ENCODE measurements at regions of chr15 and their contacts with region 1.

Region 1: DNA sequence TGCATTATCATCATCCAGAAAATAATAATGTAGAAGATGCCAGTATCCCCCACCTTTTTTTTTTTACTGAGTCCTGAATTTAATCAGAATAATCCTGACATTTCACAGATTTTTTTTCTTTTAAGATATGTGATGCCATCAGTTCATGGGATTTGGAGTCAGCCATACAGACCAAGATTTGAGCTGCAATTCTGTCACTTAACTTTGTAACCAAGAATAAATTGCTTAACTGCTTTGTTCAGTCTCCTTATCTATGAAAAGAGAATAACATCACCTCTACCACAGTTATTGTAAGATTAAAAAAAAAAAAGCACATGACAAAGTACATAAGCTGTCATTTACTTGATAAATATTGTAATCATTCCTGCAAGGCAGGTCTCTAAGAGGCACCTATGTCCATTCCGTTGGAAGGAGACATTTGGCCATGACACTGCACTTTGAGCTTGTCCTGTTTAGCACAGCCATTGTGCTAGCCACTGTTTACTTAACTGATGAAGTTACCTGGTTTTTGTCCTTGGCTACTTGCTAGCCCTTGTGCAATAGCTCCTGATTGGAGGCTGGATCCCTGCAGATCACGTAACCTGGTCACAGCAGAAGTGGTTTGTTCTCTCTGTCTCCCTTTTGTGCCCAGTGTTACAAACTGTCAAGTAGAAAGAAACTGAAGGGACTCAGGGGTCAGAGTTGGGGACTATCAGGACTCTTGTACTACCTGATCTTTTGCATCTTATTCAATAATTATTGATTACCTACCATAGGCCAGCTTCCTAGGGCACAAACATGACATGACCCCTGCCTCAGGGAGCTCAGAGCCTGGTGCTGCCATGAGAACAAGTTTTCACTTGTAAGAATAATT is 306.0 kb downstream of the WDR72 start:
- DNase-seq: no peak
- H3K4me3 ChIP-seq: no peak overlapping the region
- H3K4me3 Mint-ChIP-seq: no peak overlapping the region
- H3K27ac ChIP-seq: no peak overlapping the region
- H3K27ac Mint-ChIP-seq: no peak overlapping the region
- H3K4me1 ChIP-seq: no peaks in the 10 kb centered on the region
- H3K4me1 Mint-ChIP-seq: no peaks in the 10 kb centered on the region
- H3K27me3 ChIP-seq: no peaks in the 10 kb centered on the region
- H3K27me3 Mint-ChIP-seq: no peaks in the 10 kb centered on the region

Region 2: GRCh38 chr15:53346583-53346982 is 106.9 kb before region 1 on chr15:
- CTCF ChIA-PET with region 1: no interaction called
- POLR2A ChIA-PET with region 1: no interaction called
- intact Hi-C with region 1: loop called (anchors 5 kb)
- DNase-seq: no peak
- H3K4me3 ChIP-seq: no peak overlapping the region
- H3K4me3 Mint-ChIP-seq: no peak overlapping the region
- H3K27ac ChIP-seq: no peak overlapping the region
- H3K27ac Mint-ChIP-seq: no peak overlapping the region
- H3K4me1 ChIP-seq: no peaks in the 10 kb centered on the region
- H3K4me1 Mint-ChIP-seq: no peaks in the 10 kb centered on the region
- H3K27me3 ChIP-seq: no peaks in the 10 kb centered on the region
- H3K27me3 Mint-ChIP-seq: no peaks in the 10 kb centered on the region

Region 3: DNA sequence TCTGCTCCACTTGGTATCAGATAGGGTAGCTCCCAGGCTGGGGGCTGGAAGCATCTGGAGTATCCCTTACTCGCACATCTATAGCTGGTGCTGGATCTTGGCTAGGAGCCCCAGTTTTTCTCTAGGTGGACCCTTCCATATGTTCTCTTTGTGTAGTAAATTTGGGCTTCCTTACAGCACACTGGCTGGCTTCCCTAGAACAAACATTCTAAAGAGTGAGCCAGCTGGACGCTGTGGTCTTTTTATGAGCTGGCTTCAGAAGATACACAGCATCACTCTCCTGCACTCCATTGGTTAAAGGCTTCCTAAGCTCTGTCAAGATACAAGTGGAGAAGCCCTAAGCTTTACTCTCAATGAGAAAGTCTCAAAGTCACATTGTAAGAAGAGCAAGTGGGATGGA is 16.1 kb before region 1 on chr15:
- CTCF ChIA-PET with region 1: no interaction called
- POLR2A ChIA-PET with region 1: no interaction called
- intact Hi-C with region 1: no loop called
- DNase-seq: no peak
- H3K4me3 ChIP-seq: no peak overlapping the region
- H3K4me3 Mint-ChIP-seq: no peak overlapping the region
- H3K27ac ChIP-seq: no peak overlapping the region
- H3K27ac Mint-ChIP-seq: no peak overlapping the region
- H3K4me1 ChIP-seq: no peaks in the 10 kb centered on the region
- H3K4me1 Mint-ChIP-seq: no peaks in the 10 kb centered on the region
- H3K27me3 ChIP-seq: no peaks in the 10 kb centered on the region
- H3K27me3 Mint-ChIP-seq: no peaks in the 10 kb centered on the region